Gastrocnemius medialis (tissue), 4 donors: ENCODE measurements at regions of chr9 and their contacts with region 1.

Region 1: DNA sequence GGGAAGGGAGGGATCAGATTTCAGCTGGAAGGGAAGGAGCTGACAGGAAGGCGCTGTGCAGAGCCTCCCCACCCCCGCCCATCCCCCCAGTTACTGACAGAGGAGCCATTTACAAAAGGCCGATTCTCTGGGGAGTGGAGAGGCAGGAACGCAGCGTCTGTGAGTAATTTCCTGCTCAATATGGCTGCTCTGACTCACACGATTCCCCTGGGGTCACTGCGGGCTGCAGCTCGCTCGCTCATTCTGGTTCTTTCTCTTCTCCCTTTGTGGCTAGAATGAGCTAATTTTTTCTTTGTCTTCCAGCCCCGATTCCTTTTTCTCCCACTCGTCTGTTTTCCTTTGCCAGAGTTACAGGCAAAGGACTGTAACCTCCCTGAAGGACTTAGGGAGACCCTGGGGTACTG is 28.8 kb downstream of the PTPA start:
- DNase-seq: peak; percentile 96 to 97
- ATAC-seq: peak; percentile 82 to 86
- H3K4me3 ChIP-seq: peak overlapping the region; percentile 51 to 77 (median 56)
- H3K27ac ChIP-seq: peak overlapping the region; percentile 95 to 100 (median 98)
- H3K4me1 ChIP-seq: peaks cover 67 to 72% of the 10 kb centered on the region in 2 donors
- H3K27me3 ChIP-seq: no peaks in the 10 kb centered on the region
- CTCF ChIP-seq: no peak
- POLR2A ChIP-seq: peak; percentile 36 to 60

Region 2: DNA sequence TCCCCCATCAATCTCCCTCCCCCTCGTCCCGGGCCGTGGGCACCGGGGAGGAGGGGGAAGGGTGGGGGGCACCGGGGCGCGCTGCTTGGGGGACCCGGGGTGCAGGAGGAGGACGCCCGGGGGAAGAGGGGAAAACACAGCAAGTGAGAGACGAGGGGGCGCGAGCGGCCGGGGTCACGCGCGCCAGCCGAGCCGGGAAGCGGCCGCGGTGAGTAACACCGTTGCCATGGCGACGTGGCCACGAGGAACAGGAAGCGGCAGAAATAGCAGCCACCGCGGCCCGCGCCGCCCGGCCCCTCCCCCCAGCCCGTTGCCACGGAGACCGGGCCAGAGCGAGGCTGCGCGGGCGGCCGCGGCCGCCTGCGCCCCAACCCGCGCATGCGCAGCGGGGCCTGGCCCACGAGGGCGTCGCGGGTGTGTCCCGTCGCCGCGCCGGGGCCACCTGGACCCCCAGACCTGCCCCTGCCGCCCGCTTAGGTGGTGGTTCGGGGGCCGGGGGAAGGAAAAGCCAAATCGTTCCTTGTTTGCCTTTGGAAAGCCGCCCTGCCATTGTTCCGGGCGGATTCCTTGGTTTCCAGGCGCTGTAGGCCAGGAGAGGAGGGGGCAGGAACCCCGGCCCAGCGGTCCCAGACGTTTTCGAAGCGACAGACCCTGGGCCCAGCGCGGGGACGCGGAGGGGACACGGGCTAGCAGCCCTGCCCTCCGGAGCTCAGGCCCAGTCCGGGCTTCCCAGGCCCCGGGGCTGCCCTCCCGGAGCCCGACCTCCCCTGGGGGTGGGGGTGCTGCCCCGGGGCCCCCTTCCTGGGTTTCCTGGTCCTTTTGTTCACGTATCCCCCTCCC is 273.8 kb after region 1 on chr9:
- in situ Hi-C with region 1: no loop called
- intact Hi-C with region 1: loop called (anchors 2 kb)
- DNase-seq: peak; percentile 98 to 99
- ATAC-seq: peak; percentile 83 to 88
- H3K4me3 ChIP-seq: peak overlapping the region; percentile 60 to 85 (median 75)
- H3K27ac ChIP-seq: peak overlapping the region; percentile 85 to 100 (median 98)
- H3K4me1 ChIP-seq: peaks cover 10 to 23% of the 10 kb centered on the region in 2 donors
- H3K27me3 ChIP-seq: no peaks in the 10 kb centered on the region
- CTCF ChIP-seq: peak in 1 of 5 experiments; percentile 22
- POLR2A ChIP-seq: peak; percentile 94 to 99

Region 3: GRCh38 chr9:129610473-129611301 is 470.7 kb after region 1 on chr9:
- in situ Hi-C with region 1: loop called in 3 of 4 experiments (anchors 5 to 10 kb)
- intact Hi-C with region 1: loop called (anchors 1 kb)
- DNase-seq: peak; percentile 45 to 60
- ATAC-seq: peak; percentile 72 to 80
- H3K4me3 ChIP-seq: peak overlapping the region; percentile 60 to 95 (median 72)
- H3K27ac ChIP-seq: peak overlapping the region; percentile 77 to 86 (median 82)
- H3K4me1 ChIP-seq: peaks cover 13 to 22% of the 10 kb centered on the region in 2 donors
- H3K27me3 ChIP-seq: no peaks in the 10 kb centered on the region
- CTCF ChIP-seq: peak; percentile 65 to 100 (median 99)
- POLR2A ChIP-seq: no peak

Region 4: DNA sequence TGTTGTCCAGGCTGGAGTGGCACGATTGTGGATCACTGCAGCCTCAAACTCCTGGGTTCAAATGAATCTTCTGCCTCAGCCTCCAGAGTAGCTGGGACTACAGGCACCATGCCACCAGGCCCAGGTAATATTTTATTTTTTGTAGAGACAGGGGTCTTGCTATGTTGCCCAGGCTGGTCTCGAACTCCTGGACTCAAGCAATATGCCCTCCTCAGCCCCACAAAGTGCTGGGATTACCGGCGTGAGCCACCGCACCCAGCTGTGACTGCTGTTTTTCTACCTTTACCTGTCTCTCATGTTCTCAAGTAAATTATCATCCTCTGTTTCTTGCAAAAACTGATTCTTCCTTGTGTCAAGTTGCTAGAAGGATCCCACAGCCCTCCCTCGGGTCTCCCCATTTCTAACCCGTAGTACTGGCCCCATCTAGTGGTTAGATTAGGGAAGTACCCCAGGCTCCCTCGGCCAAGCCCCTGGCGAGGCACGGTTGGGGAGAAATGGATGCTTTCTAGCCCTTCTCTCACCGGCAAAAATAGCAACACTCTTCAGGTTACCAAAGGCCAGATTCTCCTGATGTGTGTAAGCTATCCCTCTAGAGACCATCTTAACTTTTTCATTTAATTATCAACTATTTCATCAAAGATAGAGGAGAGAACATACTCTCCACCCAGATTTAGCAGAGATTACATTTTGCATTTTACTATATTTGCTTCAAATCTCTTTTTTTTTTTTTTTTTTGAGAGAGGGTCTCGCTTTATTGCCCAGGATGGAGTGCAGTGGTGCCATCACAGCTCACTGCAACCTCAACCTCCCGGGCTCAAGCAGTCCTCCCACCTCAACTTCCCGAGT is 643.7 kb after region 1 on chr9:
- in situ Hi-C with region 1: loop called in 3 of 4 experiments (anchors 10 to 25 kb)
- intact Hi-C with region 1: loop called (anchors 5 kb)
- DNase-seq: peak; percentile 33 to 48
- ATAC-seq: peak; percentile 81 to 89
- H3K4me3 ChIP-seq: no peak overlapping the region
- H3K27ac ChIP-seq: no peak overlapping the region
- H3K4me1 ChIP-seq: no peaks in the 10 kb centered on the region
- H3K27me3 ChIP-seq: peaks cover 0 to 6% (median 5%) of the 10 kb centered on the region in 3 donors
- CTCF ChIP-seq: peak; percentile 76 to 89 (median 85)
- POLR2A ChIP-seq: no peak